A673 (cell line): ENCODE measurements at regions of chr6 and their contacts with region 1.

Region 1: DNA sequence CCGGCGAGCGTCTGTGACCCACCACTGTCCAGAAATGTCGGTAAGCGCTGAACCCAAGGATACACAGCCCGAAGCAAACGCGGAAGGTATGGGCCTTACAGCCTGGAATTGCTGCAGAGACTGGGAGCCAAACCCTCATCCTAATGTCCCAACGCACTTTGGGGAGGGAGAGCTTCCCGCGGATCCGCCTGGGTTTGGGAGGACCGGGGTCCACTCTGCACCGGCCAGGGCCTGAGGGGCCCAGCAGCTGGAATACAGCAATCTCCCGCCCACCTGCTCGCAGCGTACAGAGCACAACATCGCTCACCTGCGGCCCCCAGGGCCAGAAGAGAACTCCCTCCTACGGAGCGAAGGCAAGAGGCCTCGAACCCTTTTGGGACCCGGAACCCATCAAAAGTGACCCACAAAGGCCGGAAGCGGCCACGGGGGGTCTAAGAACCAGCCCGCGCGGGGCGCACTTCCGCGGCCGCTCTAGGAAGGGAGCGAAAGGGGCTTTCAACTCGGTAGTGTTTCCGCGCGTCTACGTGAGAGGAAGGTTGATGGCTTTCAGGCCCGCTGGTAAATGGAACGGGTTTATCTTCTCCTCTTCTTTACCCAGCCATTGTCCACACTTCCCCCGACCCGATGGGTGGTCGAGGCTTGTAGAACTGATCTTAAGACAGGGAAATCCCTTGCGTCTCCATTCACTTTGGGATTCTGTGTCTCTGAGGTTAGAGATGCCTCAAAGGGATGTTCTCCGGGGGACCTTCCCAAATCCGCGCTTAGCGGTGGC is at the start of gene ZSCAN12:
- DNase-seq: peak; percentile 94
- H3K4me3 ChIP-seq: peak within 1 kb of the TSS; percentile 76
- H3K27ac ChIP-seq: peak within 1 kb of the TSS; percentile 81
- H3K4me1 ChIP-seq: peaks cover 12% of the 10 kb centered on the region
- H3K27me3 ChIP-seq: no peaks in the 10 kb centered on the region
- CTCF ChIP-seq: peak; percentile 76
- total RNA-seq, gene ZSCAN12: 12.1 and 13.1 TPM in 2 replicates

Region 2: GRCh38 chr6:28335564-28336283 is 63.8 kb before region 1 on chr6 and contains the start of gene ZSCAN31:
- CTCF ChIA-PET with region 1: no interaction called
- POLR2A ChIA-PET with region 1: interaction called, 11 read pairs
- intact Hi-C with region 1: no loop called
- DNase-seq: peak; percentile 97
- H3K4me3 ChIP-seq: peak within 1 kb of the TSS; percentile 55
- H3K27ac ChIP-seq: peak within 1 kb of the TSS; percentile 97
- H3K4me1 ChIP-seq: no peaks in the 10 kb centered on the region
- H3K27me3 ChIP-seq: no peaks in the 10 kb centered on the region
- CTCF ChIP-seq: no peak
- total RNA-seq, gene ZSCAN31: 3.5 and 4.3 TPM in 2 replicates

Region 3: GRCh38 chr6:28443112-28443773 is 43.7 kb after region 1 on chr6 and contains the start of gene ZSCAN23:
- CTCF ChIA-PET with region 1: no interaction called
- POLR2A ChIA-PET with region 1: interaction called, 3 read pairs
- intact Hi-C with region 1: loop called (anchors 5 kb)
- DNase-seq: peak; percentile 94
- H3K4me3 ChIP-seq: peak within 1 kb of the TSS; percentile 84
- H3K27ac ChIP-seq: peak within 1 kb of the TSS; percentile 73
- H3K4me1 ChIP-seq: peaks cover 6% of the 10 kb centered on the region
- H3K27me3 ChIP-seq: no peaks in the 10 kb centered on the region
- CTCF ChIP-seq: no peak
- total RNA-seq, gene ZSCAN23: 5.4 and 8.3 TPM in 2 replicates

Region 4: DNA sequence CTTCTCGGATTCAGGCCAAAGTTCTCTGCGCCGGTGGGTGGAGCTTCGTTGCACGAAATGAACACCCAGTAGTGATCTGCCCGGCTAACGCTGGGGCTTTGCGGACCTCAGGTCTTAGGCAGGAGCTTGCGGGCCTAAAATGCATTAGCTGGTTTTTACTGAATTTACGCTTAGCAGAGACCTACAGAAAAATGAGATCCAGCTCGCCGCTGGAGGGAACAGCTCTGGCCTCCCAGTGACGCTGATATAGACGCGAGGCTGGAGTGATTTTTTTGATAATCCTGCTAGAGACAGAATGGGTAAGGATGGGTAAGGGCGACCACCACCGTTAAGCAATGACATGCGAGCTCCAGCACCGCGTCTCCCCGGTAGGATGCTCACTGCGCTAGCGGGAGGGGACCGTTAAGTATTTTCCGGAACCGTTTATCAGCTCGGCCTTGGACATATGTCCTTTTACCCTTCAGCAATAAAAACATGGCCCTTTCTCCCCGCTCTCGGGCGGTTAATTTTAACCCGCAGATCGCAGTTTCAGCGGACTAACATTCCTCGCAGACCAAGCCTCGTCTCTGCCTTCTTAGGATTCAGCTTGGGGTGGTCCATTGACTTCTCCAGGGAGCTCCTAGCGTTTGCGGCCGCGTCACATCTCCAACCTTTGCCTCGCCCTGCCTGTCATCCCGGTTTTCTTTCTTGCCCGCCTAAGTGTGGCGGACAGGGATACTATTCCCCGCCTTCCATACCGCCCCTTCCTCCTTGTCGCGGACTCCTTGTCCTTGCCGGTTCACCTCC is 235.4 kb after region 1 on chr6:
- CTCF ChIA-PET with region 1: no interaction called
- POLR2A ChIA-PET with region 1: no interaction called
- intact Hi-C with region 1: no loop called
- DNase-seq: peak; percentile 47
- H3K4me3 ChIP-seq: peak overlapping the region; percentile 51
- H3K27ac ChIP-seq: no peak overlapping the region
- H3K4me1 ChIP-seq: peaks cover 5% of the 10 kb centered on the region
- H3K27me3 ChIP-seq: peaks cover 6% of the 10 kb centered on the region
- CTCF ChIP-seq: no peak